ENCODE measurements at regions of chr16 and their contacts with region 1.

Region 1: GRCh38 chr16:89860747-89861304 is 12.6 kb upstream of the TCF25 start:
- DNase-seq: peak; percentile 93
- CTCF ChIP-seq: peak; percentile 99

Region 2: GRCh38 chr16:89615596-89616090 is 245.2 kb before region 1 on chr16:
- CTCF ChIA-PET with region 1: interaction called, 15 read pairs
- POLR2A ChIA-PET with region 1: no interaction called
- DNase-seq: peak; percentile 70
- CTCF ChIP-seq: peak; percentile 67

Region 3: DNA sequence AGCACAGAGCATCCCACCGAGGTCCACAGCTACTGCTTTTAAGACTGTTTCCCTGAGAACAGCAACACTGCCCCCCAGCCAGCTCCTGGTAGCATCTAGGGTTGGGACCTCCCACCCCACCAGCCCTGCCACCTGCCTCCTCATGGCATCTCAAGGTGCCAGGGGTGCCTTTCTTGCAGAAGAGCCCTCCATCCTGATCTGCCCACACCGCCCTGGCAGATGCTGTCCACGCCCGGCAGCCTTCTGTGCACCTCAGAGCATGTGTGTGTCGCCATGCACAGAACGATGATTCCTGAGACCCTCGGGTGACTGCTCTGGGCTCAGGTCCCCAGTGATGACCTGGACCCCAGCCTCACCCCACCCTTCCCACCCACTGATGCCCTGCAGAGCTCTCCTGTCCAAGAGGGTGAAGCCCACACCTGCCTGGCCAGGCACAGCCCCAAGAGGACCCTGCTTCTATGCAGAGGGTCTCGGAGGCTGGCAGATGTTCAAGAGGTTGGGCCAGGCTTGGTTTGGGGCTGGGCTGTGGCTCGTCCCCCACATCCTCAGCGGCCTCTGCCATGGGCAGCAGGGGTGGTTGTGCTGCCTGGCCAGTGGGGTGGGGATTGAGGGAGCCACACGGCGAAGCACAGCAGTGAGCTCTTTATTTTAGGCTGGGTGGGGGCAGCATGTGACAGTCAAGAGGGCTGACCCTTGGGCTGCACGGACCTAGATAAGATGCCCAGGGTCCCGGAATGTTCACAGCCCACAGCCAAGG is 154.1 kb before region 1 on chr16:
- CTCF ChIA-PET with region 1: interaction called, 80 read pairs
- POLR2A ChIA-PET with region 1: no interaction called
- DNase-seq: no peak
- CTCF ChIP-seq: no peak

Region 4: DNA sequence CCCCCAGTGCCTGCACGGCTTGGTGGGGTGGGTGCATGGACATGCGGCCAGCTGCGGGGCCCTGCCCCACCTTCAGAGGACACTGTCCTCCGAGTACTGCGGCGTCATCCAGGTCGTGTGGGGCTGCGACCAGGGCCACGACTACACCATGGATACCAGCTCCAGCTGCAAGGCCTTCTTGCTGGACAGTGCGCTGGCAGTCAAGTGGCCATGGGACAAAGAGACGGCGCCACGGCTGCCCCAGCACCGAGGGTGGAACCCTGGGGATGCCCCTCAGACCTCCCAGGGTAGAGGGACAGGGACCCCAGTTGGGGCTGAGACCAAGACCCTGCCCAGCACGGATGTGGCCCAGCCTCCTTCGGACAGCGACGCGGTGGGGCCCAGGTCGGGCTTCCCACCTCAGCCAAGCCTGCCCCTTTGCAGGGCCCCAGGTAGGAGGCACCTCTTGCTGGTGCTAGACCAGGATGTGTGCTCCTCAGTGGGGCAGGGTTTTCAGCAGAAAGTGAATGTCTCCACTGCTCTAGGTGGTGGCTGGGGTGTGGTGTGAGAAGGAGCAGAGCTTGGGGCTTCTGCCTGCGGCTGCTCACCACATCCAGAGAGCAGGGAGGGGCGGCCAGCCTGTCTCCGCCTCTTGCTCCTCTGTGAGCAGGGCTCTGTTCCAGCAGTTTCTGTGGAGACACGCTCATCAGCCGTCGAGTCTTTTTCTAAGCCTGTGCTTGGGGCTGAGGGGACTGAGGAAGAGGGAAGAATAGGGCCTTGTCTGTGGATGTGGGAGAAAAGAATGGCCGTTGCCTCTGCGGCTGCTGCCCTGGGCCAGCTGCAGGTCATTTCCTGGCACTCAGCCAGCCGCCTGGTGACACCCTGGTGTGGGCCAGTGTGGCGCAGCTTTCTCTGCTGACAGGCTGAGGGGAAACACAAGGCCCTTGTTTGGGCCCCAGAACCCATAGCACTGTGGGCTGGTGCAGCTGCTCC is 137.3 kb before region 1 on chr16:
- CTCF ChIA-PET with region 1: no interaction called
- POLR2A ChIA-PET with region 1: no interaction called
- DNase-seq: no peak
- CTCF ChIP-seq: no peak

Region 5: GRCh38 chr16:89749647-89750046 is 111.2 kb before region 1 on chr16:
- CTCF ChIA-PET with region 1: interaction called, 14 read pairs
- POLR2A ChIA-PET with region 1: no interaction called
- DNase-seq: no peak
- CTCF ChIP-seq: no peak

Region 6: GRCh38 chr16:89791278-89791995 is 69.4 kb before region 1 on chr16:
- CTCF ChIA-PET with region 1: interaction called, 13 read pairs
- POLR2A ChIA-PET with region 1: no interaction called
- DNase-seq: no peak
- CTCF ChIP-seq: no peak

Region 7: DNA sequence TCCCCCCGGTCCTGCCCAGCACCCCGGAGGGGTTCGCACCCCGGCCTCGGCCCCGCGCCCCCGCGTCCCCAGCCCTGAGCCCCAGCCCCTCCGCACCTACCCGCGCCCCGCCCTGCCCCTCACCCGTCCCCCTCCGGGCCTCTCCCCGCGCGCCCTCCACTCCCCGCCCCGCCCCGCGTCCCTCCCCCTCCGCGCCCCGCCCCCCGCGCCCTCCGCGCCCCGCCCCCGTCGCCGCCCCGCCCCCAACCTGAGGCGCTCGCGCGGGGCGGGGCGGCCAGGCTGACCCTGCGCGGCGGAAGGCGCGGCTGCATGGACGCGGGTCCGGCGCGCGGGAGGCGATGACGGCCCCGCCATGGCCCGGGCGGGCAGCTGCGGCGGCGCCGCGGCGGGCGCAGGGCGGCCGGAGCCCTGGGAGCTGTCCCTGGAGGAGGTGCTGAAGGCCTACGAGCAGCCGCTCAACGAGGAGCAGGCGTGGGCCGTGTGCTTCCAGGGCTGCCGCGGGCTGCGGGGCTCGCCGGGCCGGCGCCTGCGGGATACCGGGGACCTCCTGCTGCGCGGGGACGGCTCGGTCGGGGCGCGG is 32.5 kb before region 1 on chr16 and contains the start of gene SPIRE2:
- CTCF ChIA-PET with region 1: interaction called, 14 read pairs
- POLR2A ChIA-PET with region 1: no interaction called
- DNase-seq: peak; percentile 84
- CTCF ChIP-seq: no peak

Region 8: GRCh38 chr16:89842471-89843408 is 18.1 kb before region 1 on chr16:
- CTCF ChIA-PET with region 1: interaction called, 31 read pairs
- POLR2A ChIA-PET with region 1: no interaction called
- DNase-seq: no peak
- CTCF ChIP-seq: no peak

Region 9: DNA sequence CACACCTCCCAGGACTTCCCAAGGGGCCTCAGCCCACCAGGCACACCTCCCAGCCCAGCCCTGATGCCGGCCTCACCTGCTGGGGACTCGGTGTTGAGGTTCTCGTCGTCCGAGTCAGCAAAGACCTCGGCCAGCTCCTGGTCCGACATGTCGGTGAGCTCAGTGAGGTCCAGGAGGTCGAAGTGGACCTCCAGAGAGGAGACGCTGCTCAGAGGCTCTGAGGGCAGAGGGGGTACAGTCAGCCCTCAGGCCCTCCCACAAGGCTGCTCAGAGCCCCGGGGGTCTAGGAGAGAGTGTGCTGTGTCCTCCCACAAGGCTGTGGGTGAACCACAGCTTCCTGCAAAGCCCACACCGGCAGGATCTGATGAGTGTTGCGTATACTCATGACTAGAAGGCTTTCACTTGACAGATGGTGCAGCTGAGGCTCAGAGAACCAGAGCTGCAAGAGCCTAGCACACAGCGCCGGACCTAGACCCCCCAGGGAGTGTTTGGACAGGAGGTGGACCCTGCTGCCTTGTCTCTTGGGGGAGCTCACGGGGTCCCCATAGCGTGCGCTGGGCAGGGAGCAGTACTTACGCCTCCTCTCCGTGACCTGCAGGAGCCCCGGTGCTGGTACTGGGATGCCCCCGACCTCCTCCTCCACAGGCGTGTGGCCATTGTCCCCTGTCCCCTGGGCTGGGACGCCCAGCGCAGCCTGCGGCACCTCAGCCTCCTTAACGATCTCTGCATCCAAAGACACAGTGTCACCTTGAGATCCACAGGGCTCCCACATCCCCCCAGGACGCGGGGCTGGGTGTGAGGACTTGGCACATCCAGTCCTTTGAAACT is 148.1 kb after region 1 on chr16:
- CTCF ChIA-PET with region 1: no interaction called
- POLR2A ChIA-PET with region 1: no interaction called
- DNase-seq: peak; percentile 75
- CTCF ChIP-seq: no peak